T-cell (primary cell): ENCODE measurements at regions of chr12 and their contacts with region 1.

Region 1: DNA sequence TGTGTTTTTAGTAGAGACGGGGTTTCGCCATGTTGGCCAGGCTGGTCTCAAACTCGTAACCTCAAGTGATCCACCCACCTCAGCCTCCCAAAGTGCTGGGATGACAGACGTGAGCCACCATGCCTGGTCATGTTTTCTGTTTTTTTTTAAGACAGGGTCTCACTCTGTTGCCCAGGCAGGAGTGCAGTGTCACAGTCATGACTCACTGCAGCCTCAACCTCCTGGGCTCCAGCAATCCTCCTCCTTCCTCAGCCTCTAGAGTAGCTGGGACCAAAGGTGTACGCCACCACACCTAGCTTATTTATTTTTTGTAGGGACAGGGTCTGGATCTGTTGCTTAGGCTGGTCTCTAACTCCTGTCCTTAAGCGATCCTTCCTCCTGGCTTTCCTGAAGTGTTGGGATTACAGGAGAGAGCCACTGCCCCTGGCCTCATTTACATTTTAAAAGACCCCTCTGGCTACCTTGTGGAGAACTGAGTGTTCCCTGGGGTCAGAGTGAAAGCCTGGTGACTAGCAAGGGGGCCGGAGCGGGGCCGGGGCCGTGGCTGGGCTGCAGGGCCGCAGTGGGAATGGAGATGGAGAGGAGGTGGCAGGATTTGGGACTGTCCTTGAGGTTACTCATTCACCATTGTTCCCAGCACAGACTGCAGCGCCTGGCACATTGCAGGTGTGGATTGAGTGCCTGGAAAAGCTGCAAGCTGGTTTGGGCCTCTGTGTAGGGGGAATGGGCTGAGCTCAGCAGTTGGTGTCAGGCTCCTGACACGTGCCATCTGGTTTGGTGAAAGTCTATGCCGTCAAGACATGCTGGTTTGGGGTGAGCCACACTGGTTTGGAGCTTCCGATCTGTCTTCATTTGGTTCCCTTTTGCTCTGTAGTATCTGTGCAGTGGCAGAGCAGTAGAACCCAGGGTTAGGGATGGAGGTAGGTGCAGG is 18.1 kb downstream of the KMT5A start:
- DNase-seq: no peak
- ATAC-seq: no peak
- H3K4me3 ChIP-seq: no peak overlapping the region
- H3K4me3 Mint-ChIP-seq: no peak overlapping the region
- H3K27ac ChIP-seq: no peak overlapping the region
- H3K27ac Mint-ChIP-seq: peak overlapping the region in 1 of 2 donors; percentile 17
- H3K4me1 ChIP-seq: peaks cover 0 to 4% of the 10 kb centered on the region in 2 experiments
- H3K4me1 Mint-ChIP-seq: peaks cover 0 to 9% (median 0%) of the 10 kb centered on the region in 3 donors
- H3K27me3 ChIP-seq: no peaks in the 10 kb centered on the region
- H3K27me3 Mint-ChIP-seq: no peaks in the 10 kb centered on the region

Region 2: GRCh38 chr12:123421314-123421713 is 19.3 kb after region 1 on chr12:
- CTCF ChIA-PET with region 1: interaction called in 1 of 2 experiments, 5 read pairs
- POLR2A ChIA-PET with region 1: interaction called in 1 of 2 experiments, 11 read pairs
- DNase-seq: no peak
- ATAC-seq: no peak
- H3K4me3 ChIP-seq: no peak overlapping the region
- H3K4me3 Mint-ChIP-seq: no peak overlapping the region
- H3K27ac ChIP-seq: no peak overlapping the region
- H3K27ac Mint-ChIP-seq: no peak overlapping the region
- H3K4me1 ChIP-seq: no peaks in the 10 kb centered on the region
- H3K4me1 Mint-ChIP-seq: peaks cover 0 to 6% (median 0%) of the 10 kb centered on the region in 3 donors
- H3K27me3 ChIP-seq: no peaks in the 10 kb centered on the region
- H3K27me3 Mint-ChIP-seq: no peaks in the 10 kb centered on the region

Region 3: GRCh38 chr12:123457980-123458783 is 56.2 kb after region 1 on chr12 and contains the start of gene SNRNP35:
- CTCF ChIA-PET with region 1: interaction called, 6 to 11 read pairs
- POLR2A ChIA-PET with region 1: no interaction called
- DNase-seq: peak; percentile 71 to 92 (median 83)
- ATAC-seq: peak; percentile 77 to 84 (median 78)
- H3K4me3 ChIP-seq: peak within 1 kb of the TSS; percentile 84 to 100
- H3K4me3 Mint-ChIP-seq: peak within 1 kb of the TSS; percentile 98 to 100 (median 100)
- H3K27ac ChIP-seq: peak within 1 kb of the TSS; percentile 99
- H3K27ac Mint-ChIP-seq: peak within 1 kb of the TSS; percentile 100
- H3K4me1 ChIP-seq: peaks cover 5 to 32% of the 10 kb centered on the region in 2 experiments
- H3K4me1 Mint-ChIP-seq: peaks cover 31 to 39% (median 32%) of the 10 kb centered on the region in 3 donors
- H3K27me3 ChIP-seq: no peaks in the 10 kb centered on the region
- H3K27me3 Mint-ChIP-seq: no peaks in the 10 kb centered on the region
- total RNA-seq, gene SNRNP35: 32.6 to 46.1 (median 43.2) TPM

Region 4: GRCh38 chr12:123670882-123671728 is 269.1 kb after region 1 on chr12 and contains the start of gene TCTN2:
- CTCF ChIA-PET with region 1: no interaction called
- POLR2A ChIA-PET with region 1: interaction called in 1 of 2 experiments, 11 read pairs
- DNase-seq: peak; percentile 85 to 95 (median 92)
- ATAC-seq: peak; percentile 100
- H3K4me3 ChIP-seq: peak within 1 kb of the TSS; percentile 87 to 94
- H3K4me3 Mint-ChIP-seq: peak within 1 kb of the TSS; percentile 81 to 88 (median 85)
- H3K27ac ChIP-seq: no peak within 1 kb of the TSS
- H3K27ac Mint-ChIP-seq: peak within 1 kb of the TSS; percentile 52 to 68
- H3K4me1 ChIP-seq: peaks cover 0 to 15% of the 10 kb centered on the region in 2 experiments
- H3K4me1 Mint-ChIP-seq: peaks cover 15 to 22% (median 17%) of the 10 kb centered on the region in 3 donors
- H3K27me3 ChIP-seq: no peaks in the 10 kb centered on the region
- H3K27me3 Mint-ChIP-seq: no peaks in the 10 kb centered on the region
- total RNA-seq, gene TCTN2: 5.3 to 11.9 (median 6.6) TPM